ENCODE measurements at regions of chr9 and their contacts with region 1.

Region 1: GRCh38 chr9:75185585-75186170 is 97.4 kb downstream of the OSTF1 start:
- DNase-seq: peak; percentile 27
- ATAC-seq: peak; percentile 59
- H3K4me3 ChIP-seq: no peak overlapping the region
- H3K27ac ChIP-seq: no peak overlapping the region
- H3K4me1 ChIP-seq: peaks cover 4% of the 10 kb centered on the region
- H3K27me3 ChIP-seq: no peaks in the 10 kb centered on the region
- CTCF ChIP-seq: peak; percentile 68

Region 2: GRCh38 chr9:75238311-75238978 is 52.8 kb after region 1 on chr9:
- CTCF ChIA-PET with region 1: no interaction called
- POLR2A ChIA-PET with region 1: no interaction called
- intact Hi-C with region 1: loop called (anchors 5 kb)
- DNase-seq: peak; percentile 80
- ATAC-seq: peak; percentile 91
- H3K4me3 ChIP-seq: no peak overlapping the region
- H3K27ac ChIP-seq: no peak overlapping the region
- H3K4me1 ChIP-seq: no peaks in the 10 kb centered on the region; the same call in 1 of the 2 replicates
- H3K27me3 ChIP-seq: no peaks in the 10 kb centered on the region
- CTCF ChIP-seq: peak; percentile 64

Region 3: DNA sequence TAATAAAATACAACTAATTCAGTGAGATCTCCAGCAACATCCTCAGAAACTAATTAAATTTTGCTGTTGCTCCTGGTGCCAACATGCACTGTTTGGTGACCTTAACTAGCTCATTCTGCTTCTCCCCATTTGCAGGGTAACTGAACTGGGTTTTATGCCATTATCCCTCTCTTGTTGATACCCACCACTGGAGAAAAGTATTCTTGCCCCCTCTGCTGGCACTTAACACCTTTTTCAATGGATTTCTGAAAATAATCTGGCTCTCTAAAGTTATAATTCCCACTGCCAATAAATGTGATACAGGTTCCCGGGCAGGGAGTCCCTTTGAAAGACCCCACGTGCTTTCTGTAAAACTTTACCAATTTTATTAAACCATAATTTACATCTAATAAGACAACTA is 296.9 kb after region 1 on chr9:
- CTCF ChIA-PET with region 1: no interaction called
- POLR2A ChIA-PET with region 1: no interaction called
- intact Hi-C with region 1: no loop called
- DNase-seq: no peak
- ATAC-seq: no peak
- H3K4me3 ChIP-seq: no peak overlapping the region
- H3K27ac ChIP-seq: no peak overlapping the region
- H3K4me1 ChIP-seq: no peaks in the 10 kb centered on the region
- H3K27me3 ChIP-seq: no peaks in the 10 kb centered on the region
- CTCF ChIP-seq: no peak

Measured in PC-3 (cell line).